ENCODE measurements at regions of chr5 and their contacts with region 1.

Region 1: GRCh38 chr5:43040287-43041098 is at the start of gene ANXA2R:
- DNase-seq: peak; percentile 97
- H3K4me3 Mint-ChIP-seq: peak within 1 kb of the TSS; percentile 94
- H3K27ac Mint-ChIP-seq: peak within 1 kb of the TSS; percentile 99
- H3K4me1 Mint-ChIP-seq: peaks cover 45% of the 10 kb centered on the region
- H3K27me3 Mint-ChIP-seq: peaks cover 4% of the 10 kb centered on the region

Region 2: GRCh38 chr5:42908509-42909488 is 131.7 kb before region 1 on chr5:
- CTCF ChIA-PET with region 1: interaction called, 19 read pairs
- DNase-seq: peak; percentile 94
- H3K4me3 Mint-ChIP-seq: peak overlapping the region; percentile 81
- H3K27ac Mint-ChIP-seq: peak overlapping the region; percentile 46
- H3K4me1 Mint-ChIP-seq: peaks cover 21% of the 10 kb centered on the region
- H3K27me3 Mint-ChIP-seq: peaks cover 45% of the 10 kb centered on the region

Region 3: DNA sequence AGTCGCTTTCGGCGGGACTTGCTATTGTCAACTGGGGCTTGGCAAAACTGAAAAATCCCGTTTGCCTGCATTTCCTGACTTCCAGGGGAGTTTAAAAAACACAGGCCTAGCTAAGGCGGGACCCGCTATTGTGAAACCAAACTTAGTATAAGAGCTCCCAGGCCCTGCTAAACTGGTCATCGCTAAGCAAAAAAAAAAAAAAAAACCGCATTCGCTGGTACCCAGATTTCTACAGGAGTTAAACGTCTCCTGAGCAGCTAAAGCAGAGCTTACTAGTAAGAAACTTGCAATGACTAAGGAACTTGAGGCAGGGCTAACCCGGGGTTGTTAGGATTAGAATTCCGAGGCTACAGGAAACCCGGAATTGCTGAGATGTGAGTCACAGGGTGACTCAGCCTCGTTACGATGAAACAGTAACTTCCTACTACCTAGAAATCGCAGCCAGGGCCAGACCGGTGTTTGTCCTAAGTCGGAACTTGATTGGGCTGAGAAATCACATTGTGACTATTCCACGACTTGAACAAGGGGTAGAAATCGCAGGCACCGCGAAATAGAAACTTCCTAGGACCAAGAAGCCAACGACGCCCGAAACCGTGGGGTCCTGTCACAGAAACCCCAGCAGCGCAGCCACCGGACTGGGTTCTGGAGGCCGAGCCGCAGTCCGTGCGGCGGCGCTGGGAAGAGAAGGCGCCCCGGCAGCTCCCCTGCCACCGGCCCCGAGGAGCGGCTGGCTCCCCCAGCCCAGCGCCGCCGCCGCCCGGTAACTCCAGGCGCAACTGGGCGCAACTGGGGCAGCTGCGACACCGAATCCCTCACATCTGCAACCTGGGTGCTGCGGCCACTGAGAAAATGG is 89.8 kb before region 1 on chr5:
- CTCF ChIA-PET with region 1: interaction called, 11 read pairs
- DNase-seq: peak; percentile 70
- H3K4me3 Mint-ChIP-seq: peak overlapping the region; percentile 96
- H3K27ac Mint-ChIP-seq: peak overlapping the region; percentile 100
- H3K4me1 Mint-ChIP-seq: peaks cover 47% of the 10 kb centered on the region
- H3K27me3 Mint-ChIP-seq: peaks cover 9% of the 10 kb centered on the region

Region 4: GRCh38 chr5:42994246-42995151 is 46.0 kb before region 1 on chr5:
- CTCF ChIA-PET with region 1: interaction called, 47 read pairs
- DNase-seq: peak; percentile 91
- H3K4me3 Mint-ChIP-seq: peak overlapping the region; percentile 97
- H3K27ac Mint-ChIP-seq: peak overlapping the region; percentile 99
- H3K4me1 Mint-ChIP-seq: peaks cover 27% of the 10 kb centered on the region
- H3K27me3 Mint-ChIP-seq: peaks cover 9% of the 10 kb centered on the region

Region 5: DNA sequence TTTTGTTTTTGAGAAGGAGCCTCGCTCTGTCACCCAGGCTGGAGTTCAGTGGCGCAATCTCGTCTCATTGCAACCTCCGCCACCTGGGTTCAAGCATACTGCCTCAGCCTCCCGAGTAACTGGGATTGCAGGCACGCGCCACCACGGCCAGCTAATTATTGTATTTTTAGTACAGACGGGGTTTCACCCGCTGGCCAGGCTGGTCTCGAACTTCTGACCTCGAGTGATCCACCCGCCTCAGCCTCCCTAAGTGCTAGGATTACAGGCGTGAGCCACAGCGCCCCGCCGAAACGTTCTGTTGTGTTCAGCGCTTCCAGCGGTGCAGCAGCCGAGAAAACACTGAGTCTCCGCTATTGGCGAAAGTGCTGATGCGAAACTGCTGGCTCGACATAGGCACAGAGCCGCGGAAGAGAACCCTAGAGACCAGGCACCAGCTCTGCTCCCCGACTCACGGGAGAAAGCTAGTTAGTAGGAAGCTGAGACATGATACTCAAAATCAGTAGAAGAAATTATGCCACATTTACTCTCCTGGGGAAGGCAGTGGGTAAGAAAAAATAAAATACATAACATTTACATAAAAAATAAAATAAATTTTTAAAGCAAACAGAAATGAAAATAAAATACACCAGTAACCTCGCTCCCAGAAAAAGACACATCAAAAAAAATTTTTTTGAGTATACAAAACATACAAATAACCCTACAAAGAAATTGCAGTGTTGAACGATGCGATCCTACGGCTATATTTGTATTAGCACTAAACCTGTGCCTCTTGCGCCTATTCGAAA is 31.9 kb before region 1 on chr5:
- CTCF ChIA-PET with region 1: interaction called, 20 read pairs
- DNase-seq: peak; percentile 94
- H3K4me3 Mint-ChIP-seq: peak overlapping the region; percentile 77
- H3K27ac Mint-ChIP-seq: peak overlapping the region; percentile 99
- H3K4me1 Mint-ChIP-seq: peaks cover 36% of the 10 kb centered on the region
- H3K27me3 Mint-ChIP-seq: no peaks in the 10 kb centered on the region

Region 6: GRCh38 chr5:43066799-43067741 is 26.6 kb after region 1 on chr5:
- CTCF ChIA-PET with region 1: interaction called, 35 read pairs
- DNase-seq: peak; percentile 90
- H3K4me3 Mint-ChIP-seq: peak overlapping the region; percentile 97
- H3K27ac Mint-ChIP-seq: peak overlapping the region; percentile 100
- H3K4me1 Mint-ChIP-seq: peaks cover 53% of the 10 kb centered on the region
- H3K27me3 Mint-ChIP-seq: peaks cover 4% of the 10 kb centered on the region

Region 7: DNA sequence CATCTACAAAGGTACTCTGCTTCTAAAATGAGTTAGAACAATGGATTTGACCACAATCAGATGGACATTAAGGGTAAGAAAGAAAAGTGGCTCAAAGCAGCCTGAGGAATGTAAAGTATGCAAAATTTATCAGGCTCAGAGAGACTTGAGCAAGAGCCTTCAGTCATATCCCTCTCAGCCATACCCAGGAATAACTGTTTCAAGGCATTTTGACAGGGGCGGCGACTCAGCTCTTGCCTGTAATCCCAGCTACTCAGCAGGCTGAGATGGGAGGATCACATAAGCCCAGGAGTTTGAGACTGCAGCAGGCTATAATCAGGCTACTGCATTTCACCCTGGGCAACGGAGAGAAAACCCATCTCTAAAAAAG is 38.5 kb after region 1 on chr5:
- CTCF ChIA-PET with region 1: no interaction called
- DNase-seq: no peak
- H3K4me3 Mint-ChIP-seq: no peak overlapping the region
- H3K27ac Mint-ChIP-seq: no peak overlapping the region
- H3K4me1 Mint-ChIP-seq: peaks cover 19% of the 10 kb centered on the region
- H3K27me3 Mint-ChIP-seq: no peaks in the 10 kb centered on the region

Measured in activated naive CD4-positive, alpha-beta T cell treated with anti-CD3 and anti-CD28 coated beads, Interleukin-2, amount 10 ng/mL, durations not matched to agents 7 days and 5 days (primary cell).